CD8-positive, alpha-beta T cell (primary cell): ENCODE measurements at regions of chr19 and their contacts with region 1.

Region 1: GRCh38 chr19:14136509-14137281 is at the start of gene ASF1B:
- DNase-seq: peak; percentile 93 to 99 (median 96)
- ATAC-seq: peak; percentile 80
- H3K4me3 ChIP-seq: peak within 1 kb of the TSS; percentile 76 to 79
- H3K4me3 Mint-ChIP-seq: peak within 1 kb of the TSS; percentile 91
- H3K27ac ChIP-seq: peak within 1 kb of the TSS; percentile 73 to 92
- H3K27ac Mint-ChIP-seq: peak within 1 kb of the TSS; percentile 94
- H3K4me1 ChIP-seq: peaks cover 17% of the 10 kb centered on the region
- H3K4me1 Mint-ChIP-seq: peaks cover 33% of the 10 kb centered on the region
- H3K27me3 ChIP-seq: no peaks in the 10 kb centered on the region
- H3K27me3 Mint-ChIP-seq: no peaks in the 10 kb centered on the region
- CTCF ChIP-seq: peak; percentile 68
- total RNA-seq, gene ASF1B: 0.60 to 1.6 TPM

Region 2: DNA sequence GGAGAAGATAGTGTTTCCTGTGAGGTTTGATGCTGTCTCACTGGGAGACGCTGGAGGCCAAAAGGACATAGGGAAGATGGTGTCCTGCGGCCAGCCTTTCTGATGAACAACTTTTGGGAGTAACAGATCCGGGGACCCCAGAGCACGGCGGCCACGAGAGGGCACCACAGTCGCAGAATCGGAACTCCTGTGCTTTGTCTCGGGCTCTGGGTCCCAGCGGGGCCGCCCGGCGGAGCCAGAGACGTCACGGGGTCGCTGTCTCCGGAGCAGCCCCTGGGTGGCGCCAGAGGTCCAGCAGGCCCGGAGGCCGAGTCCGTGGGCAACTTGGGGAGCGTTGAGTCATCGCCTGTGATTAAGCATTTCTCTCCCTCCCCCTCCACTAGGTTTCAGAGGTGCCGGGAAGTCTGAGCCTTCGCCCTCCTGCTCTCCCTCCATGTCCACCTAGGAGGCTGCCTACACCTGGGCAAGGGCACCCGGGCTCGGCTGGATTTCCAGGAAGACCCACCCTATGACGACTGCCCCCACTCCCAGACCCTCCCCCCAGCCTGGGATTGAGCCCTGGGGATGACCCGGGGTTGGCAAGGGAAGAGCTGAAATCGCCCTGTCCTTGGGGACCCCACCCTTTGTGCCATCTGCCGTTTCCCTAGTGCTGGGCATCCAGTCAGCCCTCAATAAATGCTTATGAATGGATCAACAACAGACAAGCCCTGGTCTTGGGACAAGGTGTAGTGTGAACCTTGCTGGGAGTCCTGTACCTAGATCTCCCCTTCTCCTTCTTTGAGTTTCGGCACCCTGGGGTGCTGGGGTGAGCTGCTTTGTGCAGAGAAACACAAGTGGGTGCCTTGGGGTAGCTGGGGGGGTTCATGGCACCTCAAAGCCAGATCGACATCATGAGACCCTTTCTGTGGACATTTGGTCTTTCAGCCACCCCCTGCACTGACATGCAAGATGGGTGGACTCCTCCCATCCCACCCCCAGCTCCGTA is 256.3 kb before region 1 on chr19:
- CTCF ChIA-PET with region 1: interaction called, 5 read pairs
- POLR2A ChIA-PET with region 1: interaction called, 3 read pairs
- intact Hi-C with region 1: loop called (anchors 1 kb)
- DNase-seq: peak; percentile 96 to 99 (median 98)
- ATAC-seq: peak; percentile 96
- H3K4me3 ChIP-seq: peak overlapping the region; percentile 13 to 20
- H3K4me3 Mint-ChIP-seq: peak overlapping the region; percentile 69
- H3K27ac ChIP-seq: peak overlapping the region in 1 of 2 experiments; percentile 61
- H3K27ac Mint-ChIP-seq: peak overlapping the region; percentile 66
- H3K4me1 ChIP-seq: peaks cover 51% of the 10 kb centered on the region
- H3K4me1 Mint-ChIP-seq: peaks cover 43% of the 10 kb centered on the region
- H3K27me3 ChIP-seq: no peaks in the 10 kb centered on the region
- H3K27me3 Mint-ChIP-seq: no peaks in the 10 kb centered on the region
- CTCF ChIP-seq: peak; percentile 99

Region 3: DNA sequence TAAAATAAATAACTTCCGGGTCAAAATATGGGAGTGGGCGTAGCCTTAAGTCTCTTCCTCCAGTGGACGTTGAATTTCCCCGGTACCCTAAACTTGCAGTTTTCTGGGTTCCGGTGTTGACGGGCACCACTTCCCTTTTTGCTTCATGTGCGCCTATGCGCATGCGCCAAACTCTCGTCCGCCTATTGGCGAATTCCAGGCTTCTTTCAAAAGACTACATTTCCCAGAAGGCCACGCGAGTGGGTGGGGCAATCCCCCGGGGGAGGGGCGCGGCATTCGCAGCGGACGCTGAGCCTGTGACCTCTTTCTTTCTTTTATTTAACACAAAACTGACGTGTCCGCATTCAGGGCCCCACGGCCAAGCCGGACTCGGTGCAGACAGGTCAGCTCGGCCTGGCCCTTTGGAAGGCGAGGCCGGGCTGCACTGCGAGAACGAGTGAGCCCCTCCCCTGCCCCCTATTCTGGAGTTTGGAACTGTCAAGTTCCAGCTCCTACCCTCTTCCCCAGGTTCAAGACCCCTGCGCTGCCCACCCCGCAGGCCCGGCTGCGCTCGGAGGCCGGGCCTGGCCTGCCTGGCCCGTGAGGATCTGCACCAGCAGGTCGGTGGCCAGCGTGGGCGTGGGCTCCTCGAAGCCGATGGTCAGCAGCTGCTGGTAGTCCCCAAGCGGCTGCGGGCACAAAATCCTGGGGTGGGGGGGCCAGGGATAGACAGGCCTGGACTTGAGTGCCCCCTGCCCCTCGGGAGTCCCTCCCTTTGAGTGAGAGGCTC is 55.2 kb before region 1 on chr19:
- CTCF ChIA-PET with region 1: interaction called, 17 read pairs
- POLR2A ChIA-PET with region 1: interaction called, 15 read pairs
- intact Hi-C with region 1: loop called (anchors 1 kb)
- DNase-seq: peak; percentile 98 to 100 (median 99)
- ATAC-seq: peak; percentile 93
- H3K4me3 ChIP-seq: peak overlapping the region; percentile 77 to 89
- H3K4me3 Mint-ChIP-seq: peak overlapping the region; percentile 91
- H3K27ac ChIP-seq: peak overlapping the region; percentile 60 to 83
- H3K27ac Mint-ChIP-seq: peak overlapping the region; percentile 90
- H3K4me1 ChIP-seq: peaks cover 17% of the 10 kb centered on the region
- H3K4me1 Mint-ChIP-seq: peaks cover 20% of the 10 kb centered on the region
- H3K27me3 ChIP-seq: no peaks in the 10 kb centered on the region
- H3K27me3 Mint-ChIP-seq: no peaks in the 10 kb centered on the region
- CTCF ChIP-seq: no peak

Region 4: DNA sequence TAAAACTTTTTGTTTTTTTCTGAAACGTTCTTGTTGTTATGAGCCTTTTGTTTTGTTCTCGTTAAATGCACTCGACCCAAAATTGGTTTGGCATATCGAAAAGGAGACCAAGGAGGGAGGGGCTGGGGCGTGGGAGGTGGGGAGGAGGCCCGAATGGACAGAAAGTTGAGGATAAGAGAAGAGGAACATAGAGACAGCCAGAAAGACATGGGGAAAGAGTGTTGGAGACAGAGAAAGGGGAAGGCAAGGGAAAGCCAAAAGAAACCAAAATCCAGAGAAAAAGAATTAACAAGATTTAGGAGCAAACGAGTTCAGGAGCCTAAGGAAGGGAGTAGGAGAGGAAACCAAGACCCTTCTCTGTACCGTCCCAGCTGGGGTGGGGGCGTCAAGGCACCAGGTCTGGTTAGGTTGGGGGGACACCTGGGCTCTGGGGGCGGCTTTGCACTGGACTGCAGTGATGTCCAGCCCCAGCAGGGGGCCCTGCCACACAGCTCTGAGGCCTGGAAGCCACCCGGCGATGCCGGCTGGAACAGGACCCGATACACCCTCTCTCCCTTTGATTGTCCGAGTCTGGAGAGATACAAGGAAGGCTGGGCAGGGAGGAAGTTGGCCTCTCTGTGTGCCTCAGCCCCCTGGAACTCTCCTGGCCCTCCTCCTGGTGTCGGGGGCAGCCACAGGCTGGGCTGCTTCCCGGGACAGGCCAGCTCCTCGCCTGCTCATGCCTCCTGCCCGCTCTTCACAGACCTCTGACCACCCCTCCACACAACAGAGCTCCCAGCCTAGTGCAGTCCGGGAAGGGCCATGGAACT is 11.3 kb after region 1 on chr19:
- CTCF ChIA-PET with region 1: interaction called, 11 read pairs
- POLR2A ChIA-PET with region 1: interaction called, 8 read pairs
- intact Hi-C with region 1: loop called (anchors 1 kb)
- DNase-seq: peak; percentile 31 to 77 (median 59)
- ATAC-seq: peak; percentile 60
- H3K4me3 ChIP-seq: no peak overlapping the region
- H3K4me3 Mint-ChIP-seq: peak overlapping the region; percentile 82
- H3K27ac ChIP-seq: peak overlapping the region; percentile 87 to 94
- H3K27ac Mint-ChIP-seq: peak overlapping the region; percentile 100
- H3K4me1 ChIP-seq: peaks cover 30% of the 10 kb centered on the region
- H3K4me1 Mint-ChIP-seq: peaks cover 38% of the 10 kb centered on the region
- H3K27me3 ChIP-seq: no peaks in the 10 kb centered on the region
- H3K27me3 Mint-ChIP-seq: no peaks in the 10 kb centered on the region
- CTCF ChIP-seq: peak; percentile 30

Region 5: DNA sequence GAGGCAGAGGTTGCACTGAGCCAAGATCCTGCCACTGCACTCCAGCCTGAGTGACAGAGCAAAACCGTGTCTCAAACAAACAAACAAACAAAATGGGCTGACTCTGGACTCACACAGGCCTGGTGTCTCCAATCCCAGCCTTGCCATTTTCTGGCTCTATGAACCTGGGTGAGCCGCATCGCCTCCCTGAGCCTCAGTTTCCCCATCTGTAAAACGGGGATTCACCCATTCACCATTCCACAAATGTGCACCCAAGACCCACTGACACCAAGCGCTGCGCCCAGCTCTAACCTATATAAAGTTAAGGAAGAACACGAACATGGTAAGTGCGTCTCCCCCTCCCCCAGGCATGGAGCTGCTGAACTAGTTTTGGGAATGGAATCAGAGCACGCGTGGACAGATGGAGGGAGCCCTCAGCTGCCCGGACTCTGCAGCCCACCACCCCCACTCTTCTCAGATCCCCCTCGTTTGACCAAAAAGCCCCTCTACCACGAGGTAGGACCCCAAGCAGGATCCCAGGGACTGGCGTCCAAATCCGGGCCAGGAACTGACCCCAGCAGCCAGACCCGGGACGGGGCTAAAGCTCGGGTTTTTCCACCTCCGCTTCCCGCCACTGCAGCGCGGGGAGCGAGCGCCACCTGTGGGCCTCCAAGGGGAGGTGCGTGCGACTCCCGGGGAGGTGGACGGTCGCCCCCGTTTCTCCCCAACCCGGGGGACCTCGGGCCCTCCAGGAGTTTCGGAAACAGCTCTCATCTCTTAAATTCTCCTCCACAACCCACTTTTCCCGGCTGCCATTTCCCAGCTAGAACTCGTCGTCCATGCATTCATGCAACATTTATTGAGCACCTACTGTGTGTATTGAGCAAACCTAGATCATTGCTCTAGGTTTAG is 211.5 kb after region 1 on chr19:
- CTCF ChIA-PET with region 1: interaction called, 50 read pairs
- POLR2A ChIA-PET with region 1: interaction called, 13 read pairs
- intact Hi-C with region 1: loop called (anchors 1 to 2 kb)
- DNase-seq: peak; percentile 31 to 85 (median 64)
- ATAC-seq: peak; percentile 82
- H3K4me3 ChIP-seq: peak overlapping the region; percentile 19 to 20
- H3K4me3 Mint-ChIP-seq: peak overlapping the region; percentile 15
- H3K27ac ChIP-seq: no peak overlapping the region
- H3K27ac Mint-ChIP-seq: no peak overlapping the region
- H3K4me1 ChIP-seq: peaks cover 19% of the 10 kb centered on the region
- H3K4me1 Mint-ChIP-seq: peaks cover 13% of the 10 kb centered on the region
- H3K27me3 ChIP-seq: no peaks in the 10 kb centered on the region
- H3K27me3 Mint-ChIP-seq: no peaks in the 10 kb centered on the region
- CTCF ChIP-seq: peak; percentile 92

Region 6: GRCh38 chr19:14419106-14419813 is 282.6 kb after region 1 on chr19 and contains the start of gene DDX39A:
- CTCF ChIA-PET with region 1: interaction called, 4 read pairs
- POLR2A ChIA-PET with region 1: interaction called, 4 read pairs
- intact Hi-C with region 1: loop called in 1 of 2 experiments (anchors 1 kb)
- DNase-seq: peak; percentile 92 to 99 (median 96)
- ATAC-seq: peak; percentile 86
- H3K4me3 ChIP-seq: peak within 1 kb of the TSS; percentile 63 to 96
- H3K4me3 Mint-ChIP-seq: peak within 1 kb of the TSS; percentile 92
- H3K27ac ChIP-seq: peak within 1 kb of the TSS; percentile 61 to 94
- H3K27ac Mint-ChIP-seq: peak within 1 kb of the TSS; percentile 95
- H3K4me1 ChIP-seq: peaks cover 42% of the 10 kb centered on the region
- H3K4me1 Mint-ChIP-seq: peaks cover 42% of the 10 kb centered on the region
- H3K27me3 ChIP-seq: no peaks in the 10 kb centered on the region
- H3K27me3 Mint-ChIP-seq: no peaks in the 10 kb centered on the region
- CTCF ChIP-seq: no peak
- total RNA-seq, gene DDX39A: 342 to 372 TPM

Region 7: GRCh38 chr19:14517840-14518505 is 381.3 kb after region 1 on chr19 and contains the start of gene DNAJB1:
- CTCF ChIA-PET with region 1: no interaction called
- POLR2A ChIA-PET with region 1: interaction called, 4 read pairs
- intact Hi-C with region 1: loop called in 1 of 2 experiments (anchors 1 kb)
- DNase-seq: peak in 7 of 9 experiments; percentile 51 to 82 (median 61)
- ATAC-seq: peak; percentile 2
- H3K4me3 ChIP-seq: peak within 1 kb of the TSS; percentile 80 to 97
- H3K4me3 Mint-ChIP-seq: peak within 1 kb of the TSS; percentile 95
- H3K27ac ChIP-seq: peak within 1 kb of the TSS; percentile 97 to 99
- H3K27ac Mint-ChIP-seq: peak within 1 kb of the TSS; percentile 97
- H3K4me1 ChIP-seq: peaks cover 68% of the 10 kb centered on the region
- H3K4me1 Mint-ChIP-seq: peaks cover 67% of the 10 kb centered on the region
- H3K27me3 ChIP-seq: no peaks in the 10 kb centered on the region
- H3K27me3 Mint-ChIP-seq: no peaks in the 10 kb centered on the region
- CTCF ChIP-seq: no peak
- total RNA-seq, gene DNAJB1: 963 to 995 TPM